Caco-2 (cell line): ENCODE measurements at regions of chr9 and their contacts with region 1.

Region 1: DNA sequence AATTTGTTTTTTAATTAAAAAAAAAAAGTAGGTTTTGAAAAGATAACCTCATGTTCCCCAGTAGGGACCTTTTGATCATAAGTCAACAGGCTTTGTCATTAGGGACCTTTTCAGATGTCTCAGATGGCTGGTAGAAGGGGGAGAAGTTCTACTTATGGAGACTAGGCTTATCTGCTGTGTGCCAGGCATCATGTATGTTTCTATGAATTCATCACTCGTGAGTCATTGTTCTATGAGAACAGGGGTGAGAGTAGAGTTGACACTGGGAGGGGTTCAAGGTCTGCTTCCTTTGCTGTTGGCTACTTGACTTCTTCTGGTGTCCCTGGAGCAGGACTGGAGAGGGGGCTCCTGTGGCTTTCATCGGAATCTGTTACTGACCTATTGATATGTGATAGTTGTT is 138.8 kb downstream of the KDM4C start:
- DNase-seq: no peak
- H3K4me3 ChIP-seq: no peak overlapping the region
- H3K4me3 Mint-ChIP-seq: no peak overlapping the region
- H3K27ac Mint-ChIP-seq: peak overlapping the region; percentile 89
- H3K4me1 ChIP-seq: peaks cover 68% of the 10 kb centered on the region
- H3K4me1 Mint-ChIP-seq: peaks cover 35% of the 10 kb centered on the region
- H3K27me3 ChIP-seq: no peaks in the 10 kb centered on the region
- H3K27me3 Mint-ChIP-seq: no peaks in the 10 kb centered on the region
- CTCF ChIP-seq: no peak

Region 2: DNA sequence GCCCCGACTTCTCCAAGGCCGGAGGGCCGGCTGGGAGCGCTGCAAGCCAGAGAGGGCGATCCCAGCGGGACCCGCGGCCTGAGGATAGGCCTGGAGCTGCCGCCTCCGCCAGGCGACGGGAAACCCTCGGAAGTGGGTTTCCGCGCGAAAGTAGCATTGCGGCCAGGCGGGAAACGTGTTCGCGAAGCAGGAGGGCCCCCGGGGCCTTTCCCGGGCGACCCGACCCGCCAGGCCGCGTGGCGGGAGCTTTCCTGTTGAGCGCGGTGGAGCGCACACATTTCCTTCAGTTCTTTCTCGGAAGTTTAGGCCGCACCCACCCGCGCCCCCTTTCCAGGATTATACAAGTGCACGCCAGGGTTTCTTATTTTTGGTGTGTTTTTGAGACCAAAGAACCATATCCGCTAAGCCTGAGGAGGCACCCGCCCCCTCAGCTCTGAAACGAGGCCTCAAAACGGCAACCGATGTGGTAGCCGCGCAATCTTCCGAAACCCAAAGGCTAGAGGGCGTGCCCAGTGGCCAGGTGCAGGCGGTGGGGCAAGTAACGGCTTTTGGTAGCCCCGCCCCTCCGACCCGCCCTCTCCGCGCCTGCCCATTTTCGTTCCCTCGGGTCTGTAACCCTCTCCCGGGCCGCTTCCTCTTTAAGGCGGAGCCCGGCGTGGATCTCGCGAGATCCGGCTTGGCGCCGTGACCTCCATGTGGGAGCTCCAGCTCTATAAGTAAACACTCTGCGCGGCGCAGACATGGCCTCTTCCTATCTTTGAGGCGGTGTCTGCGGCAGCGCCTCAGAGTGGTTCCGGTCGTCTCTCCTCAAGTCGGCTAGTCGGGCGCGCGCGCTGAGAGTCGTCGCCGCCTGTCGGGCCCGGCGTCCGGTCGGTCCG is 483.8 kb before region 1 on chr9 and contains the start of gene UHRF2:
- CTCF ChIA-PET with region 1: no interaction called
- POLR2A ChIA-PET with region 1: no interaction called
- intact Hi-C with region 1: no loop called
- DNase-seq: peak; percentile 94 to 97
- H3K4me3 ChIP-seq: peak within 1 kb of the TSS; percentile 87
- H3K4me3 Mint-ChIP-seq: peak within 1 kb of the TSS; percentile 90
- H3K27ac Mint-ChIP-seq: no peak within 1 kb of the TSS
- H3K4me1 ChIP-seq: peaks cover 8% of the 10 kb centered on the region; the same call in 1 of the 2 replicates
- H3K4me1 Mint-ChIP-seq: no peaks in the 10 kb centered on the region
- H3K27me3 ChIP-seq: no peaks in the 10 kb centered on the region
- H3K27me3 Mint-ChIP-seq: no peaks in the 10 kb centered on the region
- CTCF ChIP-seq: no peak
- total RNA-seq, gene UHRF2: 38.1 and 46.5 TPM in 2 replicates

Region 3: DNA sequence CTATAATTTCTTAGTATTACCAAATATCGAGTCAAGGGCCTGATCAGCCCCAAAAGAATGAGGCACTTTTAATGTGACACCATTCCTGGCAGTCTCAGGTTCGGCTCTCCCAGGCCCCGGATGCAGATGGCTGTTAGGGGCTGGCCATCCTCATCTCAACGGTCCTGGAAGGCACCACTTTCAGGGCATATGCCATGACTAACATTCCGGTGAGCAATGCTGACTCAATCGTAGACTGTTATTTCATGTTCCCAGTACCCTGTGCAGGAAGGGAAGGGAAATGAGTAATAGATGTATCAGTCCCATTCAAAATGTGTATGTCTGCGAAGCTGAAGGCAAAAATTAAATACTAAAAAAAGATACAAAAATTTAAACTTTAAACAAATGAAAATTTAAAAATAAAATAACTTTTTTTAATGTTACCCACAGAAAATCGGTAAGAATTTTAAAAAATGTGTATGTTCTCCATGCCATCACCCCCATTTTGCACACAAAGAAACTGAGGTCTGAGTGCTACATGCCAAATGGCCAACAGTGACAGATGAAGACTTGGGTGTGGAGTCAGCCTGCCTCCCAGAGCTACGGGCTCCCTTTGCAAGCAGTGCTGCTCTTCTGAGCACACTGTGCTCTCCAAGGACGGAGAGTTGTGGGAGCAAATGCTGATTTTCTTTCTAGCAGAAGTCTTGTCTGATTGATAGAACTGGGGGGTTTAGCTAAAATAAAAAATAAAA is 330.0 kb before region 1 on chr9:
- CTCF ChIA-PET with region 1: no interaction called
- POLR2A ChIA-PET with region 1: no interaction called
- intact Hi-C with region 1: no loop called
- DNase-seq: no peak
- H3K4me3 ChIP-seq: no peak overlapping the region
- H3K4me3 Mint-ChIP-seq: no peak overlapping the region
- H3K27ac Mint-ChIP-seq: no peak overlapping the region
- H3K4me1 ChIP-seq: no peaks in the 10 kb centered on the region
- H3K4me1 Mint-ChIP-seq: no peaks in the 10 kb centered on the region
- H3K27me3 ChIP-seq: no peaks in the 10 kb centered on the region
- H3K27me3 Mint-ChIP-seq: no peaks in the 10 kb centered on the region
- CTCF ChIP-seq: no peak

Region 4: DNA sequence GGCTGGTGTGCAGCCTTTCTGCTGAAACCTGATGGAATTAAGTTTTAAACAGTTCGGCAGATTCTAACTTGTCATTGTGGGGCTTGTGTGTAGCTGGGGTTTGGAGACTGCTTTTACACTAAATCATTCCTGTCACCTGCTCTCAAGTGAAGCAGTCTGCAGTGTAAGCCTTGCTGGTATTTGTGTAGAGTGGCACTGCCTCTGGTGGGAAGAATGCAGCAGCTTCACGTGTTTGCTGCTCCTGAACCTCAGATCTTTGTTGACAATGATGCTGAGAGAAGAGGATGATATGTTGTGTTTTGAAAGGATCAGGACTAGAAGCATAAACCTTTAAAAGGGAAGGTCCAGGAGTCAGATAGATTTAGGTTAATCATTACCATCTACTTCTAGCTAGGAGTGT is 50.7 kb before region 1 on chr9:
- CTCF ChIA-PET with region 1: no interaction called
- POLR2A ChIA-PET with region 1: no interaction called
- intact Hi-C with region 1: loop called (anchors 5 kb)
- DNase-seq: peak; percentile 66 to 75
- H3K4me3 ChIP-seq: no peak overlapping the region
- H3K4me3 Mint-ChIP-seq: no peak overlapping the region
- H3K27ac Mint-ChIP-seq: peak overlapping the region; percentile 74
- H3K4me1 ChIP-seq: peaks cover 13% of the 10 kb centered on the region; the same call in 1 of the 2 replicates
- H3K4me1 Mint-ChIP-seq: peaks cover 14% of the 10 kb centered on the region
- H3K27me3 ChIP-seq: no peaks in the 10 kb centered on the region
- H3K27me3 Mint-ChIP-seq: no peaks in the 10 kb centered on the region
- CTCF ChIP-seq: peak; percentile 54 to 76

Region 5: GRCh38 chr9:6877671-6878161 is 18.8 kb before region 1 on chr9:
- CTCF ChIA-PET with region 1: no interaction called
- POLR2A ChIA-PET with region 1: no interaction called
- intact Hi-C with region 1: loop called (anchors 1 kb)
- DNase-seq: peak; percentile 70 to 78
- H3K4me3 ChIP-seq: no peak overlapping the region
- H3K4me3 Mint-ChIP-seq: peak overlapping the region; percentile 66
- H3K27ac Mint-ChIP-seq: peak overlapping the region; percentile 77
- H3K4me1 ChIP-seq: peaks cover 70% of the 10 kb centered on the region
- H3K4me1 Mint-ChIP-seq: peaks cover 44% of the 10 kb centered on the region
- H3K27me3 ChIP-seq: no peaks in the 10 kb centered on the region
- H3K27me3 Mint-ChIP-seq: no peaks in the 10 kb centered on the region
- CTCF ChIP-seq: no peak

Region 6: GRCh38 chr9:6910032-6910431 is 13.5 kb after region 1 on chr9:
- CTCF ChIA-PET with region 1: no interaction called
- POLR2A ChIA-PET with region 1: no interaction called
- intact Hi-C with region 1: no loop called
- DNase-seq: no peak
- H3K4me3 ChIP-seq: no peak overlapping the region
- H3K4me3 Mint-ChIP-seq: no peak overlapping the region
- H3K27ac Mint-ChIP-seq: no peak overlapping the region
- H3K4me1 ChIP-seq: peaks cover 8% of the 10 kb centered on the region; the same call in 1 of the 2 replicates
- H3K4me1 Mint-ChIP-seq: peaks cover 6% of the 10 kb centered on the region
- H3K27me3 ChIP-seq: no peaks in the 10 kb centered on the region
- H3K27me3 Mint-ChIP-seq: no peaks in the 10 kb centered on the region
- CTCF ChIP-seq: peak in 1 of 2 experiments; percentile 36